ENCODE measurements at regions of chr1 and their contacts with region 1.

Region 1: DNA sequence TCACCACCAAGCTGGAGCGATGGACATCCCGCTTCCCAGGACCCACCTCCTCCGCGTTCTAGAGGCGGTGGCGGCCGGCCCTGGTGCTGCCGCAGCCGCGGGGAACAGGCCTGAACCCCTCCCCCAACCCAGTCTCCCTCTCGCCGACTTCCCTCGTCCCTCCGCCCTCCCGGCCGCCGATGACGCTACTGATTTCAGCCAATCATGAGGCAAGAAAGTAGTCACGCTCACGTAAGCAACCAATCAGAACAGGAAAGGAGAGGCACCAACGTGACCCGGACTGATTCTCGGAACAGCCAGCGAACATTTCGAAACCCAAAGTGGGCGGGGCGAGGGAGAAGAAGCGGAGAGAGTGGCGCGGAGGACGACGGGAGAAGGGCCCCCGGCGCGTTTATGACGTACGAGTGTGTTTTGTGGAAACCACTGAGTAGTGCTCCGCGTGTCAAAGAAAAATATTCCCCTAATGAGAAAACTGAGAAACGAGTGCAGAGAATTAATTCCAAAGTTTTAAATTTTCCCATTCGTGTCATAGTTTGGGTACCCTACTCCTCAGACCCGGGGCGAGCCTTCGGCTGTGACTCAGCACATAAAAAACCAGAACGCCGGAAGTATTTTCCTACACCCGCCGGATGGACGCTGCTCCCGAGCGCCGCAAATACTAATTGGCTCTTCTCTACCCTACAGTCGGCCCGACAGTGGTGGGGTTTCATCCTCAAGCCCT is at the start of gene NRDC:
- DNase-seq: peak; percentile 100
- H3K4me3 ChIP-seq: peak within 1 kb of the TSS; percentile 93
- H3K27ac ChIP-seq: peak within 1 kb of the TSS; percentile 98
- H3K4me1 ChIP-seq: peaks cover 54% of the 10 kb centered on the region
- H3K27me3 ChIP-seq: peaks cover 29% of the 10 kb centered on the region
- CTCF ChIP-seq: no peak
- total RNA-seq, gene NRDC: 130 TPM

Region 2: DNA sequence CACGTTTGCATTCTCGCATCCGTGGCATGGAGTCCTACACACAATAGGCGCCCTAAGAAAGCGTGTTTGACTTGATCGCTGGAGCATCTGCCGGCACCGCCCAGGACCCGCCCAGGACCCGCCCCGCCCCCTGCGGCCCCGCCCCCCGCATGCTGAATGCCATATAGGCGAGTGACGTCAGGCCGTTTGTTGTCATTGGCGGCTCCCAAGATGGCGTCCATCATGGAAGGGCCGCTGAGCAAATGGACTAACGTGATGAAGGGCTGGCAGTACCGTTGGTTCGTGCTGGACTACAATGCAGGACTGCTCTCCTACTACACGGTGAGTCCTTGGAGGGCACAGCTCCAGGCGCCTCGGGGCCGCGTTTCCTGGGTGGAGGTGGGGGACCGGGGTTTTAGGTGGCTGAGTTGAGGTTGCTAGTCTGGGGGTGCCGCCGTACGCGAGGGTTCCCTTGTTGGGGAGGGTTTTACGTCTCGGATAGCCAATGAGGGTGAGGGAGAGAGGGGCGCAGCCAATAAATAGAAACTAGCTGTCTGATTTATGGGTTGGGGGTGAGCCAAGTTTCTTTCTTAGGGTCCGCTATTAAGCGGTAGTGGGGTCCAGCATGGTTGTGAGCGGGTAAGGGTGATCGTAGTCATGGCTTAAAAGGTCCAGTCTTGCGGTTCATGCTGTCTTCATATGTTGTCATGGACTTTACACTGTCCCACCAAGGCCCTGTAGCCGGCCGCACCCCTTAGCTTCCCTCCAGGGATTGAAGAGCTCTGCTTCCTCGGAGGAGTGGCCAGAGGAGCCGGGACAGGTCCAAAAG is 261.7 kb before region 1 on chr1 and contains the start of gene OSBPL9:
- intact Hi-C with region 1: loop called (anchors 10 kb)
- DNase-seq: peak; percentile 87
- H3K4me3 ChIP-seq: peak within 1 kb of the TSS; percentile 85
- H3K27ac ChIP-seq: peak within 1 kb of the TSS; percentile 89
- H3K4me1 ChIP-seq: peaks cover 87% of the 10 kb centered on the region
- H3K27me3 ChIP-seq: no peaks in the 10 kb centered on the region
- CTCF ChIP-seq: no peak
- total RNA-seq, gene OSBPL9: 55.8 TPM

Region 3: GRCh38 chr1:51997974-51998382 is 119.2 kb after region 1 on chr1:
- intact Hi-C with region 1: no loop called
- DNase-seq: no peak
- H3K4me3 ChIP-seq: no peak overlapping the region
- H3K27ac ChIP-seq: no peak overlapping the region
- H3K4me1 ChIP-seq: no peaks in the 10 kb centered on the region
- H3K27me3 ChIP-seq: peaks cover 59% of the 10 kb centered on the region
- CTCF ChIP-seq: no peak

Measured in left ventricle myocardium inferior (tissue), 1 donor.